Prostate gland (tissue), 2 donors: ENCODE measurements at regions of chr7 and their contacts with region 1.

Region 1: DNA sequence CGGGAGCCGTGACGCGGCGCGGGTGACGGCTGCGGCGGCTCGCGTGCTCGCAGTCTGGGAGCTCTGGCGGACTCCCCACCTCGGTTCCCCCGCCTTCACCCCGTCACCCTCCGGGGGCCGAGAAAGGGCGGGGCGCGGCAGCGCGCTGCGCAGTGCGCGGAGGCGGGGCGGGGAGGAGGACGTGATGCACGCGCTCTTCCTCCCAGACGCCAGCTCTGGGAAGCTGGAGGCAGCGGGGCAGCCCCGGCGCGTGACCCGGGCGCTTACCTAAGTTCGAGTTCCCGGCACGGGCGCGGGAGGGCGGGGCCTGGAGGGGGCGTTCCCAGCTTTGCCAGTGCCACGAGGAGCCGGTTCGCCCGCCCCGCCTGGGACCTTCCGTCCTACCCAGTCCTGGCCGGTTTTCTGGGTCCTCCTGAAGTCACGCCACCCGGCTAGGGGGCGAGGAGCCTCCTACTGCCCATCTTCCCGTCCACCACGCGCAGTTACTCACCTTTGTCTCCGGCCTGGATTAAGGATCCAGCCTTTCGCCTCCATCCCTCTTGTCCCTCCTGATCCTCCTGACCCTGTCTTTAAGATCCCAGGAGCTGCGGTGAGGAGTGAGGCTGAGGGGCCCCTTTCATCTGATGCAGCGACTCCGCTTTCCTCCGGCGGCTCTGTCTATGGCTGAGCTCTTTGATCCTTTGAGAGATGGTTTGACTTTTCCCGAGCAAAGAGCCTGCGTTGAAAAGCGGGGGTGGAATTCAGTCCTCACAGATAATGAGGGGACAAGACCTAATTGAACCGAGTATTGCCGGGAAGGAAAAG is 470 bp upstream of the NAMPT start:
- DNase-seq: peak; percentile 99
- H3K4me3 ChIP-seq: peak overlapping the region; percentile 74 to 88
- H3K27ac ChIP-seq: peak overlapping the region; percentile 93 to 100
- H3K4me1 ChIP-seq: no peaks in the 10 kb centered on the region
- H3K27me3 ChIP-seq: no peaks in the 10 kb centered on the region
- CTCF ChIP-seq: no peak
- POLR2A ChIP-seq: peak; percentile 60

Region 2: GRCh38 chr7:106176414-106177299 is 108.6 kb before region 1 on chr7:
- intact Hi-C with region 1: loop called (anchors 2 kb)
- DNase-seq: peak; percentile 80
- H3K4me3 ChIP-seq: no peak overlapping the region
- H3K27ac ChIP-seq: peak overlapping the region in 1 of 2 donors; percentile 14
- H3K4me1 ChIP-seq: peaks cover 19% of the 10 kb centered on the region
- H3K27me3 ChIP-seq: no peaks in the 10 kb centered on the region
- CTCF ChIP-seq: peak; percentile 84 to 96 (median 93)
- POLR2A ChIP-seq: no peak

Region 3: DNA sequence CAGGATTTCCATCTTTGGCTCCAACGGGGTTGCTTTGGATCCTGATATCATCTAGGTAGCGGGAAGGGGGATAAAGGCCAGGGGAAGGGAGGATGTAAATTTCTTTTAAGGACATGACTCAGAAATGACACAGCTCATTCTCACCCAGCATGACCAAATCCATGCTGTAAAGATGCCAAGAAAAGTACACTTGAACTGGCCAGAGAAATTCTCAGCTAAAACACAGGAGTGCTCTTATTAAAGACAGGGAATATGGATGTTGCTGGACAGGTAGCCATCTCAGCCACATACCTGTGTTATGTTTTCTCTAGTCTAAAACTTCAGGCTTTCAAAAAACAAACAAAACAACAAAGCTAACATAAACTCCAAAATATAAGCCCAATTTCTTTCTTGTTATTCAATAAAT is 68.7 kb before region 1 on chr7:
- intact Hi-C with region 1: loop called (anchors 2 kb)
- DNase-seq: peak; percentile 70
- H3K4me3 ChIP-seq: peak overlapping the region in 1 of 2 donors; percentile 17
- H3K27ac ChIP-seq: peak overlapping the region; percentile 89 to 93
- H3K4me1 ChIP-seq: peaks cover 11% of the 10 kb centered on the region
- H3K27me3 ChIP-seq: no peaks in the 10 kb centered on the region
- CTCF ChIP-seq: no peak
- POLR2A ChIP-seq: no peak

Region 4: GRCh38 chr7:106243893-106244292 is 41.4 kb before region 1 on chr7:
- intact Hi-C with region 1: no loop called
- DNase-seq: no peak
- H3K4me3 ChIP-seq: no peak overlapping the region
- H3K27ac ChIP-seq: no peak overlapping the region
- H3K4me1 ChIP-seq: peaks cover 4% of the 10 kb centered on the region
- H3K27me3 ChIP-seq: no peaks in the 10 kb centered on the region
- CTCF ChIP-seq: no peak
- POLR2A ChIP-seq: no peak

Region 5: GRCh38 chr7:106425017-106425719 is 139.9 kb after region 1 on chr7:
- intact Hi-C with region 1: loop called (anchors 2 kb)
- DNase-seq: peak; percentile 89
- H3K4me3 ChIP-seq: no peak overlapping the region
- H3K27ac ChIP-seq: peak overlapping the region; percentile 52 to 58
- H3K4me1 ChIP-seq: peaks cover 5% of the 10 kb centered on the region
- H3K27me3 ChIP-seq: no peaks in the 10 kb centered on the region
- CTCF ChIP-seq: no peak
- POLR2A ChIP-seq: peak; percentile 20

Region 6: DNA sequence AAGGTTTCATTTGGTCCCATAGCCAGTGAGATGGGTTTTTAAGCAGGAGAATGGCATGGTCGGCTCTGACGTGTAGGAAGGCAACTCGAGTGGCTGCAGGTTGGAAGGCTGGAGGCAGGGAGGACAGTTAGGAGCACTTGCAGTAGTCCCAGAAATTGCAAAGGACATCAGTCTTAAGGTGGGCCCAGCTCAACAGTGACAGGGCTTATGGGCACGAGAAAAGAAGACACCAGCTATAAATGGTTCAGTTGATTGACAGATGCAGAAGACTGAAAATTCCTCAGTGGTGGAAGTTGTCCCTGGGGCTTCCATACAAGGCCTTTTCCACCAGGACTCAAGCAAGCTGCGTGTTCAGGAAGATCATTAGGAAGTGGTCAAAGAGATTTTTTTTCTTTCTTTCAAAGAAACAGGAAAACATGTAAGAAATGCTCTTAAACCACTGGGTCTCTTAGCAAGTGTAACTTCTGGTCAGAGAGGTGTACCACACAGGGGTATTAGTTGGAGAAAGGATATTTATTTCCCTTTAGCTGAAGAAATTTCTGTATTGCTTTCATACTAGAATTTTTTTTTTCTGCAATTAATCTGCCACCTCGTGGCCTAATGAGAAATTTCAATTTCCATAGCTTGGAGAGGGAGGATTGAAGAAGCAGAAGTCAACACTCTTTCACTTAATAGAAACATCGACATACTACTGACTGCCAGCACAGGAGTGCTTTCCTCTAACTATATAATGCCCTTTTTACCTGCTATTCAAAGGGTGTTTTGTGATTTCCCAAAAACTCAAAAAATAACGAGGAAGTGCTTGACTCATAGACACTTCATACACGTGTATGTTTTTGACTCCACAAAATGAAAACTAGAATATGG is 177.0 kb after region 1 on chr7:
- intact Hi-C with region 1: loop called (anchors 5 kb)
- DNase-seq: no peak
- H3K4me3 ChIP-seq: no peak overlapping the region
- H3K27ac ChIP-seq: no peak overlapping the region
- H3K4me1 ChIP-seq: no peaks in the 10 kb centered on the region
- H3K27me3 ChIP-seq: no peaks in the 10 kb centered on the region
- CTCF ChIP-seq: peak; percentile 39 to 87 (median 76)
- POLR2A ChIP-seq: no peak

Region 7: GRCh38 chr7:106659963-106660861 is 375.0 kb after region 1 on chr7:
- intact Hi-C with region 1: loop called (anchors 2 kb)
- DNase-seq: peak; percentile 55
- H3K4me3 ChIP-seq: peak overlapping the region; percentile 85 to 88
- H3K27ac ChIP-seq: peak overlapping the region; percentile 94
- H3K4me1 ChIP-seq: no peaks in the 10 kb centered on the region
- H3K27me3 ChIP-seq: no peaks in the 10 kb centered on the region
- CTCF ChIP-seq: peak; percentile 53 to 71 (median 61)
- POLR2A ChIP-seq: peak; percentile 30